ENCODE measurements at regions of chr10 and their contacts with region 1.

Region 1: GRCh38 chr10:133357285-133358151 is at the start of gene FUOM:
- DNase-seq: peak; percentile 50 to 84 (median 66)
- ATAC-seq: peak; percentile 92
- H3K4me3 ChIP-seq: peak within 1 kb of the TSS; percentile 61 to 72
- H3K4me3 Mint-ChIP-seq: peak within 1 kb of the TSS; percentile 81
- H3K27ac ChIP-seq: peak within 1 kb of the TSS in 1 of 2 experiments; percentile 44
- H3K27ac Mint-ChIP-seq: peak within 1 kb of the TSS; percentile 49
- H3K4me1 ChIP-seq: peaks cover 12% of the 10 kb centered on the region
- H3K4me1 Mint-ChIP-seq: peaks cover 19% of the 10 kb centered on the region
- H3K27me3 ChIP-seq: no peaks in the 10 kb centered on the region
- H3K27me3 Mint-ChIP-seq: no peaks in the 10 kb centered on the region
- CTCF ChIP-seq: no peak
- total RNA-seq, gene FUOM: 7.9 to 10.0 TPM

Region 2: DNA sequence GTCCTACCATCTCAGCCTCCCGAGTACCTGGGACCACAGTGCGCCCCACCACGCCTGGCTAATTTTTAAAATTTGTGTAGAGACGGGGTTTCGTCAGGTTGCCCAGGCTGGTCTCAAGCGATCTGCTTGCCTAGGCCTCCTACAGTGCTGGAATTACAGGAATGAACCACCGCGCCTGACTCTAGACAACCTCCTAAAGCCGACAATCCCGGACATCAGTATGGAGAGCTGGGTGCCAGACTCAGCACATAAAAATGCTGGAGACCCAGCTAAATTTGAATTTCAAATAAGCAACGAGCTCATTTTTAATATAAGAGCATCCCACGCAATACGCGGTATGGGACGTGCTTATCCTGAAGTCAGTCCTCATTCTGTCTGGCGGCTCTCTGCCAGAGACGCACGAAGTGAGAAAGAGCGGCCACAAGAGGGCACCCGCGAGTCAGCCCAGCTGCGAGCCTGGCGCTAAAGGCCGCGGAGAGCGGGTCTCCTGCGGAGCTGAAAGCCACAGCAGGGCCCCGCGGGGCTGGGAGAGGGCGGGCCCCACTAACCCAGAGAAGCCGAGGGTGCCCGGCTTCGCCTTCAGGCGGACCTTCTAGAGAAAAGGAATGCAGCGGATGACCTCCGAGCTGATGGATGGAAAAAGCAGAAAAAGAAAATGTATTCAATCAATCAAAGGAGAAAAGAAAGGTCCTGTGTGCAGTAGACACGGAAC is 27.9 kb before region 1 on chr10:
- CTCF ChIA-PET with region 1: interaction called, 18 read pairs
- POLR2A ChIA-PET with region 1: no interaction called
- intact Hi-C with region 1: loop called in 1 of 2 experiments (anchors 2 kb)
- DNase-seq: peak; percentile 75 to 94 (median 89)
- ATAC-seq: peak; percentile 81
- H3K4me3 ChIP-seq: peak overlapping the region; percentile 4 to 6
- H3K4me3 Mint-ChIP-seq: no peak overlapping the region
- H3K27ac ChIP-seq: no peak overlapping the region
- H3K27ac Mint-ChIP-seq: no peak overlapping the region
- H3K4me1 ChIP-seq: peaks cover 13% of the 10 kb centered on the region
- H3K4me1 Mint-ChIP-seq: peaks cover 9% of the 10 kb centered on the region
- H3K27me3 ChIP-seq: peaks cover 23 to 33% of the 10 kb centered on the region in 2 experiments
- H3K27me3 Mint-ChIP-seq: peaks cover 28% of the 10 kb centered on the region
- CTCF ChIP-seq: peak; percentile 96

Region 3: DNA sequence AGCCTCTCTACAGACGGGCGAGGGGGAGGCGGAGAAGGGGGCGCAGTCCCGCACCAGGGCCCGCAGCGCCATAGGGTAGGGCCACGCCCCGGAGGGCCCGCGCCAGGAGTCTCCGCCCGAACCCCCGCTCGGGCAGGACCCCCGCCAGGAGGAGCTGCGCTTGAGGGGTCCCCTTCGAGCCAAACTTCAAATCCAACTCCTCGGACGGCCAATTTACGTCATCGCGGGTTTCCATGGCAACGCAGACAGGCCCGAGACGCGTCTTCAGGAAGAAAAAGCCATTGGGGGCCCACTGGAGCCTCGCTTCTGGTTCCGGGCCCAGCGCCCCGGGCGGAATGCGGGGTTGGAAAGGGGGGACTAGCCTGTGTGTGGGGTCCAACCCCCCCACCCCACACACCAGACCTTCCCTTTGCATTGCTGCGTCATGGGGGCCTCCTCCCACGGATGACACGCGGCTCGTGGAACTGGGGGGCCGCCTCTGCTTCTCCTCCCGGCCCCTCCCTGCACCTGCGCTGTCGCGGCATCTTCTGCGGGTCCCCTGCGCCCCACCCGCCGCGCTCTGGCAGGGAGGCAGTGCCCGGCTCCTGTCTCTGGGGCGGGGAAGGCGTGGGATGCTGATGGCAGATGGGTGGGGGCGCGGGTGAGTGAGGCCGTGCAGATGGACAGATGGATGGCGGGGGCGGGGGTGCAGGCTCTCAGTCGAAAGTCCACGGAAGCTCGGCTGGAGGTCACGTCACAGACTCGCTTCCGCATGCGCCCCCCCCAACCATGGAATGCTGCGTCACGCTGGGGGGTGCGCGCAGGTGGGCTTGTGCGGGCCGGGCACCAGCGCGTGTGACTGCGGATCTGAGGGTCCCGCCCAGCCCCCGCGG is 22.0 kb before region 1 on chr10:
- CTCF ChIA-PET with region 1: no interaction called
- POLR2A ChIA-PET with region 1: interaction called, 5 read pairs
- intact Hi-C with region 1: loop called (anchors 1 kb)
- DNase-seq: peak; percentile 72 to 96 (median 87)
- ATAC-seq: peak; percentile 63
- H3K4me3 ChIP-seq: peak overlapping the region; percentile 62 to 79
- H3K4me3 Mint-ChIP-seq: peak overlapping the region; percentile 81
- H3K27ac ChIP-seq: peak overlapping the region; percentile 64 to 71
- H3K27ac Mint-ChIP-seq: peak overlapping the region; percentile 89
- H3K4me1 ChIP-seq: peaks cover 22% of the 10 kb centered on the region
- H3K4me1 Mint-ChIP-seq: peaks cover 2% of the 10 kb centered on the region
- H3K27me3 ChIP-seq: peaks cover 0 to 30% of the 10 kb centered on the region in 2 experiments
- H3K27me3 Mint-ChIP-seq: no peaks in the 10 kb centered on the region
- CTCF ChIP-seq: no peak

Region 4: DNA sequence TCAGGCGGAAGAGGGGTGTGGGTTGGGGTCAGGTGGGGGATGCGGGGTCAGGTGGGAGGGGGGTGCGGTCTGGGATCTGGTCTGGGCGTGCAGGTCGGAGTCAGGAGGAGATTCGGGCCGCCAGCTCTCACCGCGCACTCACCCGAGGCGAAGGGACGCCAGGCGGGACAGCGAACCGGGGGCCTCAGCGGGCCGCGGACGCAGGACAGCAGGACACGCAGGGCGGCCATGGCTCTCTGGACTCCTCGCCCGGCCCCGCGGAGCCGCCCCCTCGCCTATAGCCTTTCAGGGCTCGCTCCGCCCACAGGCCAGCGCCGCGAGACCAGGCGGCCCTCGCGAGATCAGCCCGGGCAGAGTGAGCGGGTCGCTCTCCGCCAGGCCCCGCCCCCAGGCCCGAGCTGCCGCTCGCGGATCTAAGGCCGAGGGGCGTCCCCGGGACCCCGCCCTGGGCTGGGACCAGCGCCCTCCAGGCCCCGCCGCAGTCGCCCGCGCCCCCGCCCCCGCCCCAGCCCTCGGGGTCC is 15.6 kb after region 1 on chr10 and contains the start of gene ECHS1:
- CTCF ChIA-PET with region 1: interaction called, 3 read pairs
- POLR2A ChIA-PET with region 1: interaction called, 5 read pairs
- intact Hi-C with region 1: loop called (anchors 1 kb)
- DNase-seq: peak; percentile 81 to 95 (median 92)
- ATAC-seq: peak; percentile 99
- H3K4me3 ChIP-seq: peak within 1 kb of the TSS; percentile 56 to 73
- H3K4me3 Mint-ChIP-seq: peak within 1 kb of the TSS; percentile 78
- H3K27ac ChIP-seq: peak within 1 kb of the TSS in 1 of 2 experiments; percentile 48
- H3K27ac Mint-ChIP-seq: peak within 1 kb of the TSS; percentile 32
- H3K4me1 ChIP-seq: peaks cover 10% of the 10 kb centered on the region
- H3K4me1 Mint-ChIP-seq: peaks cover 6% of the 10 kb centered on the region
- H3K27me3 ChIP-seq: no peaks in the 10 kb centered on the region
- H3K27me3 Mint-ChIP-seq: no peaks in the 10 kb centered on the region
- CTCF ChIP-seq: no peak
- total RNA-seq, gene ECHS1: 7.9 to 8.5 TPM

Region 5: DNA sequence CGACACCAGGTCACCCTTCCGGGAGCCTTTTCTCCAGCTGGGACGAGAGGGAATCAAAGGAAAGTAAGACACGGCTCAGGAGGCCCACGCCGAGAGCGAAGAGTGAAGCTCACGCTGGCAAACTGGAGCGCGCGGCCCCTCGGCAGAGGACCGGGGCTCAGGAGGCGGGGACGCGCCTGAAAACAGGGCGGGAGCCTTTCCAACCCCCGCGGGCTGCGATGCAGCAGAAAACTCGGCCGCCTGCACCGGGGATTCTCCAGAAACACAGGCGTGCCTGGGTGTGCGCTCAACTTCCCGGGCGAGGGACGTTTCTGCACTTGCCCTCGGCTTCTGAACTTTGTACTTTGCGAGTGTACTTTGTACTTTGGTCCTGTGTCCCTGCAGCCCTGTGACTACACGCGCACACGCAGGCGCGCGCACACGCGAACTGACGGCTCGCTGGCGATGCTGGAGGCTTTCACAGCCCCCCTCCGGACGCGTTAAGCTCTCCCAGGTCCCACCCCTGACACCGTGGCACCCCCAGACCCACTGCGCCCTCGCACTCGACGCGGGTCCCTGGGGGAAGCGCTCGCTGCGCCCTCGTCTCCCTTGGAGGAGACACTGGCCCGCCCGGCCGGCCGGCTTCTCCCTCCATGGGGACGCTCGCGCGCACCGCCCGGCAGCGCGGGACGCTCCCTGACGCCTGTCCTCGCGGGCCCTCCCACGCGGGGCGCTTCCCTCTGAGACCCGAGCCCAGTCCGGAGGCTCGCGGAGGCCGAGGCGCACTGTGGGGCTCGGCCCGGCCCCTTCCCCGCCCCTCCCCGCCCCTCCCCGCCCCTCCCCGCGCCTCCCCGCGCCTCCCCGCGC is 21.0 kb after region 1 on chr10:
- CTCF ChIA-PET with region 1: interaction called, 3 read pairs
- POLR2A ChIA-PET with region 1: interaction called, 5 read pairs
- intact Hi-C with region 1: loop called (anchors 1 kb)
- DNase-seq: peak in 8 of 9 experiments; percentile 36 to 78 (median 60)
- ATAC-seq: peak; percentile 61
- H3K4me3 ChIP-seq: peak overlapping the region; percentile 85 to 95
- H3K4me3 Mint-ChIP-seq: peak overlapping the region; percentile 87
- H3K27ac ChIP-seq: peak overlapping the region; percentile 40 to 43
- H3K27ac Mint-ChIP-seq: peak overlapping the region; percentile 66
- H3K4me1 ChIP-seq: peaks cover 17% of the 10 kb centered on the region
- H3K4me1 Mint-ChIP-seq: peaks cover 10% of the 10 kb centered on the region
- H3K27me3 ChIP-seq: no peaks in the 10 kb centered on the region
- H3K27me3 Mint-ChIP-seq: no peaks in the 10 kb centered on the region
- CTCF ChIP-seq: no peak